ENCODE measurements at regions of chr15 and their contacts with region 1.

Region 1: DNA sequence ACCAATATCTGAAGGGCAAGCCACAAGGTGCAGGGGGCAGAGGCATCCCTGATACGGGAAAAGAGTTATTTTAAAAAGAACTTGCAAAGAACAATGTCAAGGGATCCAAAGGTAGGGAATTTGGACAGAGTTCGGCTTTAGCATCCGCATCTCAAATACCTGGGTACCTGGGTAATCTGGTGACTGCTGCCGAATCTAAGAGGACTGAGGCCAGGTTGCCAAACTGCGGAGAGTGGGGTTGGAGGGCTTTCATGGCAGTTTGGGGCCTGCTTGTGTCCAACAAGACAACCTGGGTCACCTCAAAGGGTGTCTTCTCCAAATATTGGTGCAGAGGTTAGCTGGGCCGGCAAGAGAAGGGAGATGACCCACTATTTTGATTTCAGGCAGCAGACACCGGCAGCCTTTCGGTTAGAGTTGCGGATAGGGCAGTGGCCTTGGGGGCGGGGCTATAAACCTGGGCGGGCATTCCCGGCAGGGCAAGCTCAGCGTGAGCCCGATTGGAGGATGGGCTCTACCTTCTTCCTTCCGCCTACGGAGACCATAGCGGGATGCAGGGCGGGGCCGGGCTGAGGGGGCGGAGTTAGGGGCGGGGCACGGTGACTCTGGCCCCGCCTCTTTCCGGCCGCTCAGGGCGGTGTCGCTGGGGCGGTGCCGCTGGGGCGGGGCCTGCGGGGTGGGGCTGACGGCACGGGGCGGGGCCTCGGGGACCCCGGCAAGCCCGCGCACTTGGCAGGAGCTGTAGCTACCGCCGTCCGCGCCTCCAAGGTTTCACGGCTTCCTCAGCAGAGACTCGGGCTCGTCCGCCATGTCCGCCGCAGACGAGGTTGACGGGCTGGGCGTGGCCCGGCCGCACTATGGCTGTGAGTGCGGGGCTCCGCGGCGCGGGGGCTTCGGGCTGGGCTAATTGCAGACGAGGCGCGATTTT is at the start of gene IQGAP1:
- DNase-seq: peak; percentile 99
- H3K4me3 Mint-ChIP-seq: peak within 1 kb of the TSS; percentile 88
- H3K27ac Mint-ChIP-seq: peak within 1 kb of the TSS; percentile 99
- H3K4me1 Mint-ChIP-seq: peaks cover 42% of the 10 kb centered on the region
- H3K27me3 Mint-ChIP-seq: no peaks in the 10 kb centered on the region
- total RNA-seq, gene IQGAP1: 154 and 160 TPM in 2 replicates

Region 2: DNA sequence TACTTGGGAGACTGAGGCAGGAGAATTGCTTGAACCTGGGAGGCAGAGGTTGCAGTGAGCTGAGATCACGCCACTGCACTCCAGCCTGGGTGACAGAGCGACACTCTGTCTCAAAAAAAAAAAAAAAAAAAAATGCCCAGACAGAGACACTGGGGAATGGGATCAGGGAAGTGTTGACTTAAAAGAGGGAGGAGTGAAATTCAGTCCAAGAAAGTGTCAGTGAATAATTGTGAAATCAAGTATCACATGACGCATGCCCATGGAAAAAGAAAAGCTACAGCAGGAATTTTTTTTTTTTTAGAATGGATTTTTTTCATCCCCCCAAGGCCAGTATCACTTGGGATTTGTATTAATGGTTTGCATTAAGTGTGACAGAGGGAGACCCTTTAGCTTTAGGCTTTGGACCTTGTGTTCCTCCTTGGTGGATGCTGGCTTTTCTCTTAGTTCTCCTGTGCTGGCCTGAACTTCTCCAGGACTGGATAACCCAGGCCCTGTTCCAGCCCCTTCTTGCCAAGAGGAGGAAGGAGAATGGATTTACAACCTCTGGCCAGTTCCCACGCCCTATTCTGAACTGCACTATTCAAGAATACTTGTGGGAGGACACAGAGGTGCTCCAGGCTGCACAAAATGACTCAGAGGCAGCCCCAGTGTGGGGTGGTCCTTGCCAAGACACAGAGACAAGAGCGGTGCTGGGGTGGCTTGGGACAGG is 72.4 kb before region 1 on chr15:
- intact Hi-C with region 1: no loop called
- DNase-seq: no peak
- H3K4me3 Mint-ChIP-seq: no peak overlapping the region
- H3K27ac Mint-ChIP-seq: peak overlapping the region; percentile 1
- H3K4me1 Mint-ChIP-seq: peaks cover 20% of the 10 kb centered on the region
- H3K27me3 Mint-ChIP-seq: peaks cover 15% of the 10 kb centered on the region

Region 3: GRCh38 chr15:90352109-90352893 is 35.5 kb before region 1 on chr15 and contains the start of gene ZNF774:
- intact Hi-C with region 1: loop called (anchors 2 kb)
- DNase-seq: peak; percentile 97
- H3K4me3 Mint-ChIP-seq: peak within 1 kb of the TSS; percentile 89
- H3K27ac Mint-ChIP-seq: peak within 1 kb of the TSS; percentile 89
- H3K4me1 Mint-ChIP-seq: peaks cover 6% of the 10 kb centered on the region
- H3K27me3 Mint-ChIP-seq: peaks cover 8% of the 10 kb centered on the region
- total RNA-seq, gene ZNF774: 1.2 and 2.3 TPM in 2 replicates

Region 4: DNA sequence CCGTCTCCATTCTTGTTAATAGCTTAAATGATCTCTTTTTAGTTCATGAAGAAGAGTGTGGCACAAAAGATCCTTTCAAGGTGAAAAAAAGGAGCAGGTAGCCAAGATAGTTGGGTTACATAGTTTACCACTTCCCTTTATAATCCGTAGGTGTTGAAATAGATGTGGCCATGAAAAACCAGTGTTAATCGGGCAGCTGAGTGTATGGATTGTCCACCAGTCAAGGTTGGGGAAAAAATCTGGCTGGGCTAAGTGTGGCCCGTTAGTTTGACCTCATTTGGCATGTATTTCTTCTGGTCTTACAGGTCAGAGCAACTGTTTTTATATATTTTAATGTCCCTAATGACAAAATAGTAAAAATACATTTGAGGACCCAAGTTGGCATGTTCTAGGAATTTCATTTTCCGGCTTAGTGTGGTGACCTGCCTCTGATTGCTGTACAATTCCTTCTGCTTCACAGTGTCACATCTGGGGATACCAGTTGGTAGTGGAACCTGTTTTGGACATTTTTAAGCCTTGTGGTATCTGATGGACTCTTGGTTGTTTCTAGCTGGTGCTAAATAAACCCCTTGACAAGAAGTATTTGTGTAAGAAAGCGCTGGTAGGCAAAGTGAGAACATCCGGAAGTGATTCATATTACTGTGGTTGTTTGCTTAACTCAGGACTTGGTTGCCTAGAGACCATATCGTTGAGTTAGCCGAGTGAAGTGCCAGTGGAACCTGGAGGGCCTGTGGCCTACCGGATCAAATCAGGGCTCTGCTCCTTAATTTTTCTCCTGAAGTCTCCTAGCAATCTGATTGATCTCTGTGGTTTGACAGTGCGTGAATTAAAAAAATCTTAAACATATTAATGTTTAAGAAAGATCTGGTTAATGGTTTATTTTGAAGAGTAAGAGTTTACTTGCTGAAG is 12.9 kb after region 1 on chr15:
- intact Hi-C with region 1: loop called (anchors 1 kb)
- DNase-seq: peak; percentile 92
- H3K4me3 Mint-ChIP-seq: peak overlapping the region; percentile 79
- H3K27ac Mint-ChIP-seq: peak overlapping the region; percentile 97
- H3K4me1 Mint-ChIP-seq: peaks cover 50% of the 10 kb centered on the region
- H3K27me3 Mint-ChIP-seq: no peaks in the 10 kb centered on the region

Measured in activated CD4-positive, alpha-beta T cell treated with anti-CD3 and anti-CD28 coated beads, Interleukin-2, amount 10 ng/mL, durations not matched to agents 24 days and 14 days (primary cell).